Gastrocnemius medialis (tissue), 4 donors: ENCODE measurements at regions of chr11 and their contacts with region 1.

Region 1: DNA sequence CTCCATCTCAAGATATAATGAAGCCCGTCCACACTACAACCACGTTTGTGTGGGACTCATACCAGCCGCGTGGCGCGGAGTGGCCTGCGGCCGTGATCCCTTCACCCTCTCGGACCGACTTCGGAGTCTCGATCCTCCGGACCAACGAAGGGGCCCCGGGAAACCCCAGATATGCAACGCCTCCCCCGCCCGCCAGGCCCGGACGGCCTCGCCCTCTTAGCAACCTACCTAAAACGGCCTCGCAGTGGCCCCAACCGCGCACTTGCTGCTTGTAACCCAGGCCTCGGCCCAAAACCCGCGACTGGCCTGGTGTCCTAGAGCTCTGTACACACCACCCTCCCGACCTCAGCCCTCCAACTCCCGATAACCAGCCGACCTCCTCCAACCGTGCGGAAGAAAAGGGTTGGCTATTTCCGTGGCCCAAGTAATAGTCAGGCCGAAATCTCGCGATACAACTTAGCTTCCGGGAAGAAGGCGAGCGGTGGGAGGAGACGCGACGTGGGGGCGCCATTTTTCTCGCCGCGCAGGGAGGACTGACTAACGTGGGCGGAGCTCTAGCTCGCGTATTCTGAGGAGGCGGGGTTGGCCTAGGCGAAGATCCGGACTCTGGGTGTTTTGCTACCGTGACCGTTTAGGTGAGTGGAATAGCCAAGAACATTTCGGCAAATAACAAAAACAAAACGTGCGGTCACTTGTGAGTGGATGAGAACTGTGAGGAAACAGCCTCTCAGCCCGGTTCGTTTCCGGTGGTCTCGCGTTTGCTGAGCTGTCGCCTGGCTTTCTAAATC is at the starts of genes C11orf54 and TAF1D:
- DNase-seq: peak; percentile 98
- ATAC-seq: peak; percentile 87 to 89
- H3K4me3 ChIP-seq: peak within 1 kb of the TSS; percentile 71 to 92 (median 76)
- H3K27ac ChIP-seq: peak within 1 kb of the TSS; percentile 91 to 99 (median 94)
- H3K4me1 ChIP-seq: peaks cover 48 to 52% of the 10 kb centered on the region in 2 donors
- H3K27me3 ChIP-seq: no peaks in the 10 kb centered on the region
- CTCF ChIP-seq: peak in 3 of 5 experiments; percentile 6 to 17 (median 9)
- POLR2A ChIP-seq: peak; percentile 93 to 95
- total RNA-seq, gene C11orf54: 33.3 to 71.0 (median 42.0) TPM
- total RNA-seq, gene TAF1D: 42.6 to 85.5 (median 55.0) TPM

Region 2: DNA sequence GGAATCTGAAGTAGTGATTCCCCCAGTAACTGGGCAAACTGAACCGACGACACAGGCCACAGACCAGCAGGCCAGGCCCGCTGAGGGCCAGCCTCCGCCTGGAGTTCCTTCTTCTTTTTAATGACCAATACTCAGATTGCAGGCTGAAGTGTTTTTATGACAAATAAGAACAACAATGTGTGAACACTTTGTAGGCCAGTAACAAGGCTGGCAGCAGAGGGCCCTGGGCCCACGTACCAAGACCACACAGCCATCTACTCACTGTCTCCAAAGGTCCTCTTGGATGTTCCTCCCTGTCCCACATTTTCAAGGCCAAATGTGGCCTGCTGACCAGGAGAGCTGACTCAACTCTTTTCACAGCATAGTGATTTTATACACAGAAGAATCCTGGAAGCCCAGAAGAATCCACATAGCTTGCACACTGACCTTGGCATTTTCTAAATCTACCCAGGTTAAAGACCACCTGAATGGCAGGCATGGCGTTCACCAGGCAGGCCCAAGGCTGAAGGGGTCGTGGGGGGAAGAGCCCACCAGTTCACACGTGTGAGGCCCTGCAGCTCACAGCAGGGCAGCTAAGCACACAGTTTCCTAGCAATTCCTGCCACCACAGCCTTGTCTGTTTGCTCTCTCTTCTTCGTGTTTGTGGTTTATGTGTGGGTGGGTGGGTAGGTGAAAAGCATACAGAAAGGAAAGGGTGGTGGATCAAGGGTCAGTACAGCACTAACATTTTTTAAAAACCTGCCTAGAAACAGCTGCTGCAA is 211.4 kb before region 1 on chr11:
- in situ Hi-C with region 1: no loop called
- intact Hi-C with region 1: loop called (anchors 10 kb)
- DNase-seq: no peak
- ATAC-seq: no peak
- H3K4me3 ChIP-seq: peak overlapping the region in 1 of 4 donors; percentile 24
- H3K27ac ChIP-seq: peak overlapping the region; percentile 85 to 98 (median 90)
- H3K4me1 ChIP-seq: peaks cover 70 to 71% of the 10 kb centered on the region in 2 donors
- H3K27me3 ChIP-seq: no peaks in the 10 kb centered on the region
- CTCF ChIP-seq: no peak
- POLR2A ChIP-seq: no peak

Region 3: DNA sequence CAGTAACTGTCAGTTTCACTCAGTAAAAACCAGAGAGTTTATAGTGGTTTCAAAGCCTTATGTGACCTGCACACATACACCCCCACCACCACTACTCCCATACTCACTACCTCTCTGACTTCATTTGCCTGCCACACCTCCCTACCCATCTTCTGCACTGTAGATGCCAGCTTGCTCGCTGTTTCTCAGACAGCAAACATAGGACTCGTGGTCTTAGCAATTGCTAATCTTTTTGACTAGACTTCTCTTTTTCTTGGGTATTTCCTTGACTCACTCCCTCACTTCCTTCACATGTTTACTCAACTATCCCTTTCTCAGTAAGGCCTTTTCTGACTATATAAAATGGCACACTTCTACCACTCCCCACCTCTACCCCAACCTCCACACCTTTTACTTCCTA is 52.0 kb before region 1 on chr11:
- in situ Hi-C with region 1: loop called in 1 of 4 experiments (anchors 10 kb)
- intact Hi-C with region 1: no loop called
- DNase-seq: no peak
- ATAC-seq: no peak
- H3K4me3 ChIP-seq: no peak overlapping the region
- H3K27ac ChIP-seq: no peak overlapping the region
- H3K4me1 ChIP-seq: no peaks in the 10 kb centered on the region
- H3K27me3 ChIP-seq: no peaks in the 10 kb centered on the region
- CTCF ChIP-seq: no peak
- POLR2A ChIP-seq: no peak

Region 4: DNA sequence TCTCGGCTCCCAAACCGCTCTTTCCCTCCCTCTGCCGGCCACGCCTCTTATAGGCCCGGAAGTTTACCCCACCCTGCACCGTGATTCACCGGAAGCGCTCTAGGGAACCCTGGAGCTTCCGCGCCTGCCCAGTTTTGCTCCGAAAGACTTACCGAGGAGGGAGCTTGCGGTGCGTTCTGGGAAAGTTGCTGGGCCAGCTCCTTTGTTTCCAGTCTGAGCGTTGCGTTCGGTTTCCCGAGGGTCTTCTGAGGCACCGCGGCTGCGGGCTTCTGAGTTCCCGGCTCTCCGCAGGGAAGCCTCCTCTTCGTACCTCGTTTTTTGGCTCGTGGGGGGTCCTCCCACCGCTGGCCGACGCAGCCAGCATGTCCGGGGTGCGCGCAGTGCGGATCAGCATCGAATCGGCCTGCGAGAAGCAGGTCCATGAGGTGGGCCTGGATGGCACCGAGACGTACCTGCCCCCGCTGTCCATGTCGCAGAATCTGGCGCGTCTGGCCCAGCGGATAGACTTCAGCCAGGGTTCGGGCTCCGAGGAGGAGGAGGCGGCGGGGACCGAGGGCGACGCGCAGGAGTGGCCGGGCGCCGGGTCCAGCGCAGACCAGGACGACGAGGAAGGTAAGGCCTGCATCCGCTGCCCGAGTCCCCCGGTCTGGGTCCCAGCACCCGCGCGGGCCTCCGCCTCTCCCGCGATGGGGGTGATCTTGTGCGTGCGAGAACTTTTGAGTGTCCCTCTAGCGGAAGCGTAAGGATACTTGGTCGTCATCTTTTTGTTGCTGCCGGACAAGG is 43.1 kb after region 1 on chr11 and contains the start of gene MED17:
- in situ Hi-C with region 1: no loop called
- intact Hi-C with region 1: loop called (anchors 1 kb)
- DNase-seq: peak; percentile 88
- ATAC-seq: peak; percentile 99
- H3K4me3 ChIP-seq: peak within 1 kb of the TSS; percentile 73 to 98 (median 91)
- H3K27ac ChIP-seq: peak within 1 kb of the TSS; percentile 91 to 94 (median 94)
- H3K4me1 ChIP-seq: peaks cover 27 to 35% of the 10 kb centered on the region in 2 donors
- H3K27me3 ChIP-seq: no peaks in the 10 kb centered on the region
- CTCF ChIP-seq: peak in 4 of 5 experiments; percentile 38 to 53 (median 44)
- POLR2A ChIP-seq: peak; percentile 79
- total RNA-seq, gene MED17: 12.3 to 14.0 (median 13.4) TPM

Region 5: GRCh38 chr11:94493281-94494125 is 752.2 kb after region 1 on chr11 and contains the starts of genes ANKRD49 and MRE11:
- in situ Hi-C with region 1: loop called in 1 of 4 experiments (anchors 25 kb)
- intact Hi-C with region 1: no loop called
- DNase-seq: peak; percentile 96 to 98
- ATAC-seq: peak; percentile 100
- H3K4me3 ChIP-seq: peak within 1 kb of the TSS; percentile 80 to 94 (median 86)
- H3K27ac ChIP-seq: peak within 1 kb of the TSS; percentile 76 to 87 (median 82)
- H3K4me1 ChIP-seq: peaks cover 24 to 27% of the 10 kb centered on the region in 2 donors
- H3K27me3 ChIP-seq: no peaks in the 10 kb centered on the region
- CTCF ChIP-seq: no peak
- POLR2A ChIP-seq: peak; percentile 53 to 74
- total RNA-seq, gene ANKRD49: 9.0 to 21.1 (median 11.9) TPM
- total RNA-seq, gene MRE11: 5.3 to 12.3 (median 5.9) TPM